ENCODE measurements at regions of chr2 and their contacts with region 1.

Region 1: GRCh38 chr2:193428336-193428818 is 1233.6 kb upstream of the TMEFF2 start:
- DNase-seq: peak; percentile 100
- ATAC-seq: peak; percentile 100
- H3K4me3 ChIP-seq: peak overlapping the region in 2 of 3 experiments; percentile 13 to 24; a peak in 2 of 6 replicates
- H3K27ac ChIP-seq: peak overlapping the region; percentile 82
- H3K4me1 ChIP-seq: peaks cover 33% of the 10 kb centered on the region
- H3K27me3 ChIP-seq: no peaks in the 10 kb centered on the region
- CTCF ChIP-seq: no peak
- EP300 ChIP-seq: peak; percentile 86 to 99; a peak in 3 of 4 replicates
- POLR2A ChIP-seq: no peak
- RAD21 ChIP-seq: no peak

Region 2: DNA sequence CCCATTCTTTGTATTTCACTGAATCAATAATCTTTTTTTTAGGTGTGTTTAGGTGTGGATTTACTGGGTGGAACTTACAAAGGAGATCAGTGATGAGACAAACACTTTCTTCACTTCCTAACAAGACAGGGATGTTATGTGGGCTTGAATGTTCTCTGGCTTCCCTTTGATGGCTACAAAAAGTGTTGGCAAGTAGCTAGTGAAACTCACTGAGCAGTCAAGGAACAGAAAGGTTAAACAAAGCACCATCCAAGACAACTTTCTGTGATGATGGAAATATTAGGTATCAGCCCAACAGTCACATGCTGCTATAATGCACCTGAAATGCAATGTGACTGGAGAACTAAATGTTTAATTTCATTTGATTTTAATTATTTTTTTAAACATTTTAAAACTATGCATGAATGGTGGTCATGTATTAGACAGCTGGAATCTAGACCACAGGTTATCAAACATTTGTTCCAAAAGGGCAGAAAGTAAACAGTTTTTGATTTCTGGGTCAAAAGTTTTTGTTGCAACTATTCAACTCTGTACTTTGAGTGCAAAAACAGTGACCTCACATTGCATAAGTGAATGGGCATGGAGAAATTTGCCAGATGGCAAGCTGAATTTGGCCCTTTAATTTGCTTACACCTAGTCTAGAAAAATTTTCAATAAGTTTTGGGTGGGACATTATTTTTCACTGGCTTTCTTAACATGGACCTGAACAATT is 39.1 kb after region 1 on chr2:
- CTCF ChIA-PET with region 1: no interaction called
- POLR2A ChIA-PET with region 1: interaction called, 3 read pairs
- in situ Hi-C with region 1: no loop called
- intact Hi-C with region 1: loop called (anchors 2 kb)
- DNase-seq: no peak
- ATAC-seq: no peak
- H3K4me3 ChIP-seq: no peak overlapping the region
- H3K27ac ChIP-seq: no peak overlapping the region
- H3K4me1 ChIP-seq: peaks cover 8% of the 10 kb centered on the region
- H3K27me3 ChIP-seq: no peaks in the 10 kb centered on the region
- CTCF ChIP-seq: no peak
- EP300 ChIP-seq: peak in 1 of 2 experiments; percentile 27; a peak in 1 of 4 replicates
- POLR2A ChIP-seq: no peak
- RAD21 ChIP-seq: no peak

Region 3: DNA sequence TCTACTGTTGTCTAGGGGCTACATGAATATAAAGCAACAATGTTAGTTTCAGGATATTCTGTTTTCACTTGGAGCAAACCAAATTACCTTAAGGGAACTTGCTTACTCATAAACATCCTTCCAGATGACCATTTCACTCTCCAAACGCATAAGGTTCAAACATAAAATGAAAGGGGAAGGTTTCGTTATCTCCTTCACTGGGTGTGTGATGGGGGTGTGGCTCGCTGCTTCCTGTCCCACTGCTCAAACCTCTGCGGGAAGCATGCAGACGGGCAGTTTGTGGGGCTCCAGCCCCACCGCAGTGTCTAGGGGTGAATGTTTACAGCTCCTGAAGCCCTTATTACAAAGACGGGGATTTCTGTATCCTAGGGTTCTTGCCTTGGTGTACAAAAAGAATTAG is 77.2 kb after region 1 on chr2:
- CTCF ChIA-PET with region 1: no interaction called
- POLR2A ChIA-PET with region 1: no interaction called
- in situ Hi-C with region 1: no loop called
- intact Hi-C with region 1: no loop called
- DNase-seq: no peak
- ATAC-seq: no peak
- H3K4me3 ChIP-seq: no peak overlapping the region
- H3K27ac ChIP-seq: no peak overlapping the region
- H3K4me1 ChIP-seq: no peaks in the 10 kb centered on the region
- H3K27me3 ChIP-seq: no peaks in the 10 kb centered on the region
- CTCF ChIP-seq: no peak
- EP300 ChIP-seq: no peak
- POLR2A ChIP-seq: no peak
- RAD21 ChIP-seq: no peak

Region 4: GRCh38 chr2:193539188-193539587 is 110.8 kb after region 1 on chr2:
- CTCF ChIA-PET with region 1: no interaction called
- POLR2A ChIA-PET with region 1: no interaction called
- in situ Hi-C with region 1: no loop called
- intact Hi-C with region 1: loop called (anchors 1 kb)
- DNase-seq: peak; percentile 6
- ATAC-seq: no peak
- H3K4me3 ChIP-seq: no peak overlapping the region
- H3K27ac ChIP-seq: no peak overlapping the region
- H3K4me1 ChIP-seq: 0 out of 2 replicates have a peak, but pooled peaks cover 8% of the 10 kb centered on the region
- H3K27me3 ChIP-seq: no peaks in the 10 kb centered on the region
- CTCF ChIP-seq: no peak
- EP300 ChIP-seq: no peak
- POLR2A ChIP-seq: no peak
- RAD21 ChIP-seq: no peak

Measured in HepG2 (cell line).